Mammary epithelial cell (primary cell): ENCODE measurements at regions of chr2 and their contacts with region 1.

Region 1: DNA sequence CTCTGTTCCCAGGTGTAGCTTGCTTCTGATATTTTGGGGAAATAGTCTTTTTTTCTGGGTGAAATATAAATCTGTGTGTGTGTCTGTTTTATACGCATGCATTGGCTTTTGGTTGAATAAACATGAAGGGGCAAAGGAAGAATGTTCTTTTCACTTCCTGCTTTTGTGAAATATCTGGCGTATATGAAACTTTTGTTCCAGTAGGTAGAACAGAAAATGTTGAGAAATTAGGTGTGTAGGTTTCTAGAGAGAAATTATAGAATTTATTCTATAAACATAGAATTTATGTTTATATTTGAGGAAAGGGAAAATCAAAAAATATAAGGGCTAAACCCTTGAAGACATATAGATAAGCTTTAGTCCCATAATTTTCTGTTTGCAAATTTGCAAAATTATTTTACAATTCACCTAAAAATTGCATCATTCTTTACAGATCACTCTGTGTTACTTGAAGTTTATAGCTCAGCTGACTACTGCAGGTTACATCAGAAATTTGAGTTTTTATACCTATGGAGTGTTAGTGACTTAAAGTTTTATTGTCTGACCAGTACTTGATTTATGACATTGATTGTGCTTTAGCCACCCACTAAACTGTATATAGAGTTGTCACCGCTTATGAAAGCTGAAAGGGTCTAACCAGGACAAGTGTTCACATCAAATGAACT is 116.1 kb downstream of the FAM117B start:
- DNase-seq: no peak
- H3K4me3 ChIP-seq: no peak overlapping the region
- H3K27ac ChIP-seq: no peak overlapping the region
- H3K4me1 ChIP-seq: no peaks in the 10 kb centered on the region
- H3K27me3 ChIP-seq: no peaks in the 10 kb centered on the region
- CTCF ChIP-seq: no peak

Region 2: DNA sequence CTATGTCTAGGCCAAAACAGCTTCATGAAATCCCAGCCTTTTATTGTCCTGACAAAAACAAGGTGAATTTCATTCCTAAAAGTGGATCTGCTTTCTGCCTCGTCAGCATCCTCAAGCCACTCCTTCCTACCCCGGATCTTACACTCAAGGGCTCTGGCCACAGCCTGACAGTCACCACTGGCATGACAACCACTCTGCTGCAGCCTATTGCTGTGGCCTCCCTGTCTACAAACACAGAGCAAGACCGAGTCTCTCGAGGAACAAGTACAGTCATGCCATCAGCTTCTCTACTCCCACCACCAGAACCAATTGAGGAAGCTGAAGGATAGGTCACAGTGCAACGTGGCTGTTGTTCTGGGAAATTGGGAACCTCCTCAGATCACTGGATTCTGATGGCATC is 14.5 kb after region 1 on chr2:
- CTCF ChIA-PET with region 1: no interaction called
- dilution Hi-C with region 1: no loop called
- in situ Hi-C with region 1: no loop called
- intact Hi-C with region 1: loop called (anchors 1 kb)
- DNase-seq: peak; percentile 77
- H3K4me3 ChIP-seq: no peak overlapping the region
- H3K27ac ChIP-seq: no peak overlapping the region
- H3K4me1 ChIP-seq: peaks cover 10% of the 10 kb centered on the region
- H3K27me3 ChIP-seq: no peaks in the 10 kb centered on the region
- CTCF ChIP-seq: no peak